ENCODE measurements at regions of chr14 and their contacts with region 1.

Region 1: DNA sequence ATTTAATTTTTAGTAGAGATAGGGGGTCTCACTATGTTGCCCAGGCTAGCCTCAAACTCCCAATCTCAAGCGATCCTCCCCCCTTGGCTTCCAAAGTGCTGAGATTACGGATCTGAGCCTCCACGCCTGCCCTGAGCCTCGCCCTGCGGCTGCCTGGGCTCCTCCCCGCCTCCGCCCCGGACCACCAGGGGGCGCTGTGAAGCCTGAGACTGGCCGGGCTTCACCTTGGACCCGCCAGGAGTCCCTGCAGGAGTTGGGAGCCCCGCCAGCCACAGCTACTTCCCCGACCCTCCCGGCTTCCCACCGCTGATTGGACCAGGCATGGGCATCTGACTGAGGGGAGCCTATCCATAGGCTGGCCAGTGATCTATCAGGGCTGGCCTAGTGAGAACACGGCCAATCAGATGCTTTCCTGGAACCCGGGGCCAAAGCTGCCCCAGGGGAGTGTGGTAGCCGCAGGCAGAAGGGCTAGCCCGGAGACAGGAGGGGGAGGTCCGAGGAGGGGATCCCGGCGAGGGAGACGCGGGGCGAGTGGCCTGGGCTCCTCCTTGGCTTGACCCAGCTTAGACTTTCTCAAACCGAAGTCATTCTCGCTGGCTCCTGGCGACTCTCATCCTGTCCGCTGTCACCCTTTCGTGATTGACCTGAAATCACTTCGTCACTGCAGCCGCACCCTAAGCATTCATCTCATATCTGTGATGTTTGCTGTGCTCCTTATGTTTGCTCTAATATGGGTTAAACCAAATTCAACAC is 15.1 kb upstream of the ANKRD9 start:
- DNase-seq: peak; percentile 99
- ATAC-seq: peak; percentile 86
- H3K4me3 ChIP-seq: peak overlapping the region; percentile 68
- H3K27ac ChIP-seq: peak overlapping the region; percentile 89
- H3K4me1 ChIP-seq: peaks cover 36% of the 10 kb centered on the region
- H3K27me3 ChIP-seq: no peaks in the 10 kb centered on the region
- CTCF ChIP-seq: peak; percentile 96

Region 2: GRCh38 chr14:102344485-102344884 is 180.2 kb before region 1 on chr14:
- CTCF ChIA-PET with region 1: no interaction called
- POLR2A ChIA-PET with region 1: interaction called, 12 read pairs
- intact Hi-C with region 1: no loop called
- DNase-seq: no peak
- ATAC-seq: no peak; the same call in 1 of the 2 replicates
- H3K4me3 ChIP-seq: no peak overlapping the region
- H3K27ac ChIP-seq: no peak overlapping the region
- H3K4me1 ChIP-seq: no peaks in the 10 kb centered on the region
- H3K27me3 ChIP-seq: no peaks in the 10 kb centered on the region
- CTCF ChIP-seq: no peak

Region 3: GRCh38 chr14:102497998-102498677 is 26.5 kb before region 1 on chr14:
- CTCF ChIA-PET with region 1: interaction called, 10 read pairs
- POLR2A ChIA-PET with region 1: no interaction called
- intact Hi-C with region 1: no loop called
- DNase-seq: peak; percentile 41
- ATAC-seq: peak; percentile 48; the same call in 1 of the 2 replicates
- H3K4me3 ChIP-seq: no peak overlapping the region
- H3K27ac ChIP-seq: no peak overlapping the region
- H3K4me1 ChIP-seq: no peaks in the 10 kb centered on the region
- H3K27me3 ChIP-seq: no peaks in the 10 kb centered on the region
- CTCF ChIP-seq: peak; percentile 61

Region 4: GRCh38 chr14:102591889-102592763 is 67.5 kb after region 1 on chr14 and contains the start of gene RCOR1:
- CTCF ChIA-PET with region 1: interaction called, 13 read pairs
- POLR2A ChIA-PET with region 1: interaction called, 4 read pairs
- intact Hi-C with region 1: loop called (anchors 1 kb)
- DNase-seq: peak; percentile 97
- ATAC-seq: peak; percentile 76
- H3K4me3 ChIP-seq: peak within 1 kb of the TSS; percentile 94
- H3K27ac ChIP-seq: peak within 1 kb of the TSS; percentile 91
- H3K4me1 ChIP-seq: peaks cover 21% of the 10 kb centered on the region
- H3K27me3 ChIP-seq: no peaks in the 10 kb centered on the region
- CTCF ChIP-seq: no peak
- total RNA-seq, gene RCOR1: 22.2 and 23.4 TPM in 2 replicates

Region 5: GRCh38 chr14:102605025-102605424 is 80.4 kb after region 1 on chr14:
- CTCF ChIA-PET with region 1: no interaction called
- POLR2A ChIA-PET with region 1: interaction called, 10 read pairs
- intact Hi-C with region 1: no loop called
- DNase-seq: peak; percentile 31
- ATAC-seq: peak; percentile 51
- H3K4me3 ChIP-seq: no peak overlapping the region
- H3K27ac ChIP-seq: no peak overlapping the region
- H3K4me1 ChIP-seq: peaks cover 3% of the 10 kb centered on the region; the same call in 1 of the 2 replicates
- H3K27me3 ChIP-seq: no peaks in the 10 kb centered on the region
- CTCF ChIP-seq: no peak

Region 6: GRCh38 chr14:102694530-102695166 is 170.0 kb after region 1 on chr14:
- CTCF ChIA-PET with region 1: interaction called, 4 read pairs
- POLR2A ChIA-PET with region 1: no interaction called
- intact Hi-C with region 1: loop called (anchors 2 kb)
- DNase-seq: peak; percentile 89
- ATAC-seq: peak; percentile 34; the same call in 1 of the 2 replicates
- H3K4me3 ChIP-seq: no peak overlapping the region
- H3K27ac ChIP-seq: no peak overlapping the region
- H3K4me1 ChIP-seq: peaks cover 47% of the 10 kb centered on the region
- H3K27me3 ChIP-seq: no peaks in the 10 kb centered on the region
- CTCF ChIP-seq: peak; percentile 74

Measured in PC-3 (cell line).